A549 (cell line): ENCODE measurements at regions of chr6 and their contacts with region 1.

Region 1: GRCh38 chr6:36851149-36851614 is 11.9 kb upstream of the CPNE5 start:
- DNase-seq: peak; percentile 19 to 45
- ATAC-seq: no peak
- H3K4me3 ChIP-seq: no peak overlapping the region
- H3K27ac ChIP-seq: no peak overlapping the region
- H3K4me1 ChIP-seq: no peaks in the 10 kb centered on the region
- CTCF ChIP-seq: peak; percentile 53
- EP300 ChIP-seq: no peak
- POLR2A ChIP-seq: no peak
- RAD21 ChIP-seq: peak; percentile 31 to 50; a peak in 3 of 5 replicates

Region 2: DNA sequence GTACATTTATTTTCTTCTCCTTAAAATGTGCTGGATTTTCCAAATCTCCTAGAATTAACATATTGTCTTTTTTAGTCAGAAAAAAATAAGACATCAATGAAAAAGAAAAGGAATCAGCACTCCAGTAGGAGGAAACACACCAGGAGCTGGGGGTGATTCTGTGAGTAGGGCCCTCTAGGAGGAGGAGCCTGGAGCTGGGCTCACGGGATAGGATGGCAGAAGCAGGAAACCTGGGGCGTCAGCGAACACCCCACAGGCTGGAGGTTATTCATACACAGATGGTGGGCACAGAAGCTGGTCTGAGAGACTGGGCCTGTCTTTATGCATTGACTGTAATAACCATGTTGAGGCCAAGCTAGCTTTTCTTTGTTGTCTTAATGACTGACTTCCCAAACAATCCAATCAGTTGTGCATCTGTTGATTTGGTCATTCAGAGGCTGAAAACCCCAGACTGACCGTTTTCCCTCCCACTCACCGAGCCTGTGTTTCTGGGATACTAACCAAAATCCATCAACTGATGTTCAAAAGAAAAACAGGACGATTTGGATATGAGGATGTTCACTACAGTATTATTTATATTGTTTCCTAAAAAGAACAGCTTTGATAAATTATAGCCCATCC is 65.0 kb before region 1 on chr6:
- CTCF ChIA-PET with region 1: interaction called, 11 read pairs
- POLR2A ChIA-PET with region 1: no interaction called
- DNase-seq: no peak
- ATAC-seq: peak in 1 of 2 experiments; percentile 42; a peak in 1 of 6 replicates
- H3K4me3 ChIP-seq: no peak overlapping the region
- H3K27ac ChIP-seq: no peak overlapping the region
- H3K4me1 ChIP-seq: no peaks in the 10 kb centered on the region
- CTCF ChIP-seq: no peak
- EP300 ChIP-seq: no peak
- POLR2A ChIP-seq: no peak
- RAD21 ChIP-seq: no peak

Region 3: DNA sequence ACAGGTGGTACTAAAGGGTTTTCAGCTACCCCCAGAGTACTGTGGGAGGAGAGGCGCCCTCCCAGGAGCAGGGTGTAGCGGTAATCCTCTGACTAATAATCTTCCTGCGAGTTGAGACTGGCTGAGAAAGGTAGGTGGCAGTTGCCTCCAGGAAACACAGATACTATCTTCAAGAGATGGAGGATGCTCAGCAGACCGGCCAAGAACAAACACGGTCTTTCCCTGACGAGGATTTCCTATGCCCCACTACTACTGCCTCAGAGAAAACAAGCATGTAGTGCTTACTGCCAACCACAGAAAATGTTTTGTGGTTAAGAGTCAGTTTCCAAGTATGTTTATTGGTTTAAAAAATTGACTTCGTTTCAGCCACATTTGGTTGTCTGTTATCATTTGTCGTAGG is 61.4 kb after region 1 on chr6:
- CTCF ChIA-PET with region 1: no interaction called
- POLR2A ChIA-PET with region 1: no interaction called
- DNase-seq: no peak
- ATAC-seq: no peak
- H3K4me3 ChIP-seq: no peak overlapping the region
- H3K27ac ChIP-seq: no peak overlapping the region
- H3K4me1 ChIP-seq: peaks cover 16% of the 10 kb centered on the region
- CTCF ChIP-seq: no peak
- EP300 ChIP-seq: no peak
- POLR2A ChIP-seq: no peak
- RAD21 ChIP-seq: no peak